ENCODE measurements at regions of chr2 and their contacts with region 1.

Region 1: DNA sequence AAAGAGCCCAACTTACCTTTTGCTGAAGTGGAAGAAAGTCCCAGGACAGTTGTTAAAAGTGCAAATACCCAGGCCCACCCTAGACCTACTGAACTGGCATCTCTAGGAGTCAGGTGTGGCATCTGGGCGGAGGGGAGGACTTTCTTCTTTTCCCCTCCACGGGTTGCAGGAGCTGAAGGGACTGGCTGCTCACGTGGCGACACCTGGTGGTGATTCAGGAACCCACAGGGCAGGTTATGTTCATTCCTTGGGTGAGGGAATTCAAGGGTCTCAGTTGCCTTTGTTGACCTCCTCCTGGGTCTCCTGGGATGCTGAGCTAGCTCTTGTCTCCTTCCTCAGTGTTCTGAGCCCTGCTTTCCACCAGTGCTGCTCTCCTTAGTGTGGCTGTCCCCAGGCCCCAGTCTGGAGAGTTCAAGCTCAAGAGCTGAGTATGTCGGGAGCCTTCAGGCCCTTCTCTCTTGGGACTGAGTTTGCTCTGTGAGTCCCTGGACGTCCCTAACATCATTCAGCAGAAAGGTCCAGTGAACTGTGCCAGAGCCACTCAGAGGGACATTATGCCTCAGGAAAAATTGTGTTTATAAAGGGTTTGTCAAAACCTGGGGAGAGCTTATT is 56.9 kb downstream of the DYSF start:
- DNase-seq: peak; percentile 21 to 55 (median 48)
- H3K4me3 ChIP-seq: no peak overlapping the region
- H3K4me3 Mint-ChIP-seq: no peak overlapping the region
- H3K27ac ChIP-seq: no peak overlapping the region
- H3K27ac Mint-ChIP-seq: peak overlapping the region in 1 of 7 donors; percentile 53
- H3K4me1 ChIP-seq: no peaks in the 10 kb centered on the region
- H3K4me1 Mint-ChIP-seq: no peaks in the 10 kb centered on the region
- H3K27me3 ChIP-seq: no peaks in the 10 kb centered on the region
- H3K27me3 Mint-ChIP-seq: peaks cover 0 to 3% (median 0%) of the 10 kb centered on the region in 3 donors
- CTCF ChIP-seq: peak; percentile 85

Region 2: GRCh38 chr2:71460595-71461303 is 49.6 kb before region 1 on chr2:
- intact Hi-C with region 1: loop called (anchors 2 to 5 kb)
- DNase-seq: peak in 2 of 3 donors; percentile 31 to 57
- H3K4me3 ChIP-seq: no peak overlapping the region
- H3K4me3 Mint-ChIP-seq: no peak overlapping the region
- H3K27ac ChIP-seq: peak overlapping the region in 1 of 2 donors; percentile 18
- H3K27ac Mint-ChIP-seq: peak overlapping the region in 2 of 7 donors; percentile 12 to 52
- H3K4me1 ChIP-seq: peaks cover 36 to 62% of the 10 kb centered on the region in 2 donors
- H3K4me1 Mint-ChIP-seq: peaks cover 51% of the 10 kb centered on the region
- H3K27me3 ChIP-seq: peaks cover 0 to 23% of the 10 kb centered on the region in 2 donors
- H3K27me3 Mint-ChIP-seq: peaks cover 2 to 6% (median 3%) of the 10 kb centered on the region in 3 donors
- CTCF ChIP-seq: peak; percentile 90

Region 3: GRCh38 chr2:71578767-71579342 is 68.6 kb after region 1 on chr2:
- intact Hi-C with region 1: no loop called
- DNase-seq: no peak
- H3K4me3 ChIP-seq: no peak overlapping the region
- H3K4me3 Mint-ChIP-seq: no peak overlapping the region
- H3K27ac ChIP-seq: no peak overlapping the region
- H3K27ac Mint-ChIP-seq: no peak overlapping the region
- H3K4me1 ChIP-seq: no peaks in the 10 kb centered on the region
- H3K4me1 Mint-ChIP-seq: no peaks in the 10 kb centered on the region
- H3K27me3 ChIP-seq: no peaks in the 10 kb centered on the region
- H3K27me3 Mint-ChIP-seq: no peaks in the 10 kb centered on the region
- CTCF ChIP-seq: no peak

Region 4: GRCh38 chr2:71742953-71743601 is 232.8 kb after region 1 on chr2:
- intact Hi-C with region 1: no loop called
- DNase-seq: no peak
- H3K4me3 ChIP-seq: no peak overlapping the region
- H3K4me3 Mint-ChIP-seq: no peak overlapping the region
- H3K27ac ChIP-seq: no peak overlapping the region
- H3K27ac Mint-ChIP-seq: no peak overlapping the region
- H3K4me1 ChIP-seq: no peaks in the 10 kb centered on the region
- H3K4me1 Mint-ChIP-seq: no peaks in the 10 kb centered on the region
- H3K27me3 ChIP-seq: no peaks in the 10 kb centered on the region
- H3K27me3 Mint-ChIP-seq: peaks cover 1 to 7% (median 5%) of the 10 kb centered on the region in 3 donors
- CTCF ChIP-seq: no peak

Measured in CD14-positive monocyte (primary cell).